Gastrocnemius medialis (tissue), 4 donors: ENCODE measurements at regions of chrX and their contacts with region 1.

Region 1: DNA sequence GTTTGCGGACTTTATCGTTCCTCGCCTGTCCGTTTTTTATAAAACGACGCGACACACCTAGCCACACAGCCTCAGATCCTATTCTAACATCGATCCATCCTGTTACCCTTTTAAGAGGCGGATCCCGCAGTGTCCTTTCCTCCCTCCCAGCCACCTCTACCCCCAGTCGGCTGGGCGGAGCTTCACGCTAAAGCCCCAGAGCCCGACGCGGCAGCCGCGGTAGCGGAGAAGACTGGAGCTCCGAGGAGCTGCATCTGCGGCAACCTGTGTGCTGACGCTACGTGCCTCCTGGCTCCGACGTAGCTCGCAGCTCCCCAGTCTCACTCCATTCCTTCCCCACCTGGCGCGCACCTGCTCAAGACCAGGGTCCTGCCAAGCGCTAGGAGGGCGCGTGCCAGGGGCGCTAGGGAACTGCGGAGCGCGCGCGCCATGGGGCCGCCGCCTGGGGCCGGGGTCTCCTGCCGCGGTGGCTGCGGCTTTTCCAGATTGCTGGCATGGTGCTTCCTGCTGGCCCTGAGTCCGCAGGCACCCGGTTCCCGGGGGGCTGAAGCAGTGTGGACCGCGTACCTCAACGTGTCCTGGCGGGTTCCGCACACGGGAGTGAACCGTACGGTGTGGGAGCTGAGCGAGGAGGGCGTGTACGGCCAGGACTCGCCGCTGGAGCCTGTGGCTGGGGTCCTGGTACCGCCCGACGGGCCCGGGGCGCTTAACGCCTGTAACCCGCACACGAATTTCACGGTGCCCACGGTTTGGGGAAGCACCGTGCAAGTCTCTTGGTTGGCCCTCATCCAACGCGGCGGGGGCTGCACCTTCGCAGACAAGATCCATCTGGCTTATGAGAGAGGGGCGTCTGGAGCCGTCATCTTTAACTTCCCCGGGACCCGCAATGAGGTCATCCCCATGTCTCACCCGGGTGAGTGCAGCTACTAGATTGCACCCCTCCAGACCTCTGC is at the start of gene RNF128:
- DNase-seq: peak; percentile 9 to 57
- ATAC-seq: peak; percentile 79 to 87
- H3K4me3 ChIP-seq: peak within 1 kb of the TSS; percentile 57 to 70 (median 64)
- H3K27ac ChIP-seq: peak within 1 kb of the TSS; percentile 81 to 92 (median 88)
- H3K4me1 ChIP-seq: peaks cover 0 to 4% of the 10 kb centered on the region in 2 donors
- H3K27me3 ChIP-seq: peaks cover 0 to 11% (median 8%) of the 10 kb centered on the region in 3 donors
- CTCF ChIP-seq: no peak
- POLR2A ChIP-seq: peak; percentile 25 to 44
- total RNA-seq, gene RNF128: 2.7 to 12.2 (median 5.5) TPM

Region 2: GRCh38 chrX:106692425-106693065 is 34.2 kb before region 1 on chrX:
- in situ Hi-C with region 1: no loop called
- intact Hi-C with region 1: no loop called
- DNase-seq: no peak
- ATAC-seq: no peak
- H3K4me3 ChIP-seq: no peak overlapping the region
- H3K27ac ChIP-seq: no peak overlapping the region
- H3K4me1 ChIP-seq: no peaks in the 10 kb centered on the region
- H3K27me3 ChIP-seq: no peaks in the 10 kb centered on the region
- CTCF ChIP-seq: no peak
- POLR2A ChIP-seq: no peak

Region 3: GRCh38 chrX:106707771-106708454 is 18.8 kb before region 1 on chrX:
- in situ Hi-C with region 1: no loop called
- intact Hi-C with region 1: loop called (anchors 2 kb)
- DNase-seq: peak; percentile 9 to 18
- ATAC-seq: peak; percentile 100
- H3K4me3 ChIP-seq: no peak overlapping the region
- H3K27ac ChIP-seq: peak overlapping the region; percentile 66 to 85 (median 75)
- H3K4me1 ChIP-seq: peaks cover 11 to 15% of the 10 kb centered on the region in 2 donors
- H3K27me3 ChIP-seq: no peaks in the 10 kb centered on the region
- CTCF ChIP-seq: no peak
- POLR2A ChIP-seq: no peak

Region 4: GRCh38 chrX:106891762-106892460 is 165.2 kb after region 1 on chrX:
- in situ Hi-C with region 1: no loop called
- intact Hi-C with region 1: no loop called
- DNase-seq: no peak
- ATAC-seq: no peak
- H3K4me3 ChIP-seq: no peak overlapping the region
- H3K27ac ChIP-seq: no peak overlapping the region
- H3K4me1 ChIP-seq: no peaks in the 10 kb centered on the region
- H3K27me3 ChIP-seq: peaks cover 0 to 7% (median 0%) of the 10 kb centered on the region in 3 donors
- CTCF ChIP-seq: no peak
- POLR2A ChIP-seq: no peak

Region 5: GRCh38 chrX:106919932-106920452 is 193.2 kb after region 1 on chrX and contains the start of gene CLDN2:
- in situ Hi-C with region 1: no loop called
- intact Hi-C with region 1: no loop called
- DNase-seq: no peak
- ATAC-seq: no peak
- H3K4me3 ChIP-seq: no peak within 1 kb of the TSS
- H3K27ac ChIP-seq: no peak within 1 kb of the TSS
- H3K4me1 ChIP-seq: no peaks in the 10 kb centered on the region
- H3K27me3 ChIP-seq: no peaks in the 10 kb centered on the region
- CTCF ChIP-seq: no peak
- POLR2A ChIP-seq: no peak
- total RNA-seq, gene CLDN2: 0.16 TPM in 1 of 4 donors, not detected in the others